Activated naive CD4-positive, alpha-beta T cell treated with anti-CD3 and anti-CD28 coated beads for 36 hours (primary cell): ENCODE measurements at regions of chr3 and their contacts with region 1.

Region 1: GRCh38 chr3:30042274-30042859 is 564.0 kb upstream of the TGFBR2 start:
- DNase-seq: peak; percentile 84
- H3K4me3 Mint-ChIP-seq: no peak overlapping the region
- H3K27ac Mint-ChIP-seq: no peak overlapping the region
- H3K4me1 Mint-ChIP-seq: no peaks in the 10 kb centered on the region
- H3K27me3 Mint-ChIP-seq: peaks cover 29% of the 10 kb centered on the region

Region 2: DNA sequence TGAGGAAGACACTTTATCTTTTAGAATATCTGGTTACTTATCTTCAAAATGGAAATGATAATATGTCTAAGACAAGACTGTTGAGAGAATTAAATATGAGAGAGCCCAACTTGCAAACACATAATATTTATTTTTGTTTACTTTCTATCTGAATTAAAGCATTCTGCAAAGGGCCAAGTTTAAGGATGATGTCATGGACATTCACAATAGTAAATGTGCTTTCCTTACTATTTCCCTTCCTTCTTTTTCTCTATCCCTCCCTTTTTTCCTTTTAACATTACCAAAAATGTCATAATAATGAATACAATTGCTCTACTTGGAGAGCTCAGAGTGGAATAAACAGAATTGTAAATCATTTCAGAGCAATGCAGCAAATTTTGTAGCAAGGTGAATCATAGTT is 11.6 kb before region 1 on chr3:
- CTCF ChIA-PET with region 1: interaction called, 11 read pairs
- intact Hi-C with region 1: no loop called
- DNase-seq: no peak
- H3K4me3 Mint-ChIP-seq: no peak overlapping the region
- H3K27ac Mint-ChIP-seq: no peak overlapping the region
- H3K4me1 Mint-ChIP-seq: no peaks in the 10 kb centered on the region
- H3K27me3 Mint-ChIP-seq: peaks cover 4% of the 10 kb centered on the region

Region 3: GRCh38 chr3:30112902-30113484 is 70.6 kb after region 1 on chr3:
- CTCF ChIA-PET with region 1: no interaction called
- intact Hi-C with region 1: loop called (anchors 2 kb)
- DNase-seq: no peak
- H3K4me3 Mint-ChIP-seq: no peak overlapping the region
- H3K27ac Mint-ChIP-seq: no peak overlapping the region
- H3K4me1 Mint-ChIP-seq: peaks cover 10% of the 10 kb centered on the region
- H3K27me3 Mint-ChIP-seq: no peaks in the 10 kb centered on the region

Region 4: GRCh38 chr3:30180310-30181177 is 138.2 kb after region 1 on chr3:
- CTCF ChIA-PET with region 1: no interaction called
- intact Hi-C with region 1: loop called (anchors 5 kb)
- DNase-seq: no peak
- H3K4me3 Mint-ChIP-seq: no peak overlapping the region
- H3K27ac Mint-ChIP-seq: no peak overlapping the region
- H3K4me1 Mint-ChIP-seq: no peaks in the 10 kb centered on the region
- H3K27me3 Mint-ChIP-seq: no peaks in the 10 kb centered on the region

Region 5: DNA sequence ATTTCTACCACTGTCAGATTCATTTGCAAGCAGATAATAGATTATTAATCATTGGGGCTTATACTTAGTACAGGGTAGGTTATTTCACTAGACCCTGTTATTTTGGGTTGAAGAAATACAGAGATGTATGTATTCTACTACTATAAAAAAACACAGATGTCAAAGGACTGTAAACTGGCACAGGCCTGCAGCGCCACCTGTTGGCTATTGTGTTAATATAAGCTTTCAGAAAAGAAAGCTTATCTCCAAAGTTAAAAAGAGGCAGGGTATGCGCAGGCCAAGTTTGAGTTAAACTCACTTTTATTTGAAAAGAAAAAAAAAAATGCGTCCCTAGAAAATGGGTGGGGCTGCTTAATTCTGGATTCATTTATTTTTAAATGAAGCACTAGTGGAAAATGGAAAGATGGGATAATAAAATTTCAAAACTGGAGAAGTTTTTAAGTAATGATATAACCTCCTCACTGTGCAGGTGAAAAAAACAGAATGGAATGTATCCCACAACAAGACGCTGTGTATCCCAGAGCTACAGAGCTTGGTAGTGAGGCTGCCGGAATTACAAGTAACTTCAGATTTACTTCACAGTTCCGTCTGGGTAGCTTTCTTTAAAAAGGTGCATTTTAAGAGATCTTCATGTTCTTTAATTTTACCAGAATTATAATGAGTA is 156.9 kb after region 1 on chr3:
- CTCF ChIA-PET with region 1: interaction called, 58 read pairs
- intact Hi-C with region 1: loop called (anchors 1 kb)
- DNase-seq: peak; percentile 89
- H3K4me3 Mint-ChIP-seq: no peak overlapping the region
- H3K27ac Mint-ChIP-seq: no peak overlapping the region
- H3K4me1 Mint-ChIP-seq: peaks cover 6% of the 10 kb centered on the region
- H3K27me3 Mint-ChIP-seq: no peaks in the 10 kb centered on the region

Region 6: DNA sequence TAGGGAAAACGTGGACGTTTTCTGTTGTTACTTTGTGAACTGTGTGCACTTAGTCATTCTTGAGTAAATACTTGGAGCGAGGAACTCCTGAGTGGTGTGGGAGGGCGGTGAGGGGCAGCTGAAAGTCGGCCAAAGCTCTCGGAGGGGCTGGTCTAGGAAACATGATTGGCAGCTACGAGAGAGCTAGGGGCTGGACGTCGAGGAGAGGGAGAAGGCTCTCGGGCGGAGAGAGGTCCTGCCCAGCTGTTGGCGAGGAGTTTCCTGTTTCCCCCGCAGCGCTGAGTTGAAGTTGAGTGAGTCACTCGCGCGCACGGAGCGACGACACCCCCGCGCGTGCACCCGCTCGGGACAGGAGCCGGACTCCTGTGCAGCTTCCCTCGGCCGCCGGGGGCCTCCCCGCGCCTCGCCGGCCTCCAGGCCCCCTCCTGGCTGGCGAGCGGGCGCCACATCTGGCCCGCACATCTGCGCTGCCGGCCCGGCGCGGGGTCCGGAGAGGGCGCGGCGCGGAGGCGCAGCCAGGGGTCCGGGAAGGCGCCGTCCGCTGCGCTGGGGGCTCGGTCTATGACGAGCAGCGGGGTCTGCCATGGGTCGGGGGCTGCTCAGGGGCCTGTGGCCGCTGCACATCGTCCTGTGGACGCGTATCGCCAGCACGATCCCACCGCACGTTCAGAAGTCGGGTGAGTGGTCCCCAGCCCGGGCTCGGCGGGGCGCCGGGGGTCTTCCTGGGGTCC is 564.1 kb after region 1 on chr3 and contains the start of gene TGFBR2:
- CTCF ChIA-PET with region 1: no interaction called
- intact Hi-C with region 1: loop called (anchors 10 kb)
- DNase-seq: peak; percentile 90
- H3K4me3 Mint-ChIP-seq: peak within 1 kb of the TSS; percentile 94
- H3K27ac Mint-ChIP-seq: peak within 1 kb of the TSS; percentile 100
- H3K4me1 Mint-ChIP-seq: peaks cover 52% of the 10 kb centered on the region
- H3K27me3 Mint-ChIP-seq: no peaks in the 10 kb centered on the region
- total RNA-seq, gene TGFBR2: 57.8 to 58.1 TPM

Region 7: DNA sequence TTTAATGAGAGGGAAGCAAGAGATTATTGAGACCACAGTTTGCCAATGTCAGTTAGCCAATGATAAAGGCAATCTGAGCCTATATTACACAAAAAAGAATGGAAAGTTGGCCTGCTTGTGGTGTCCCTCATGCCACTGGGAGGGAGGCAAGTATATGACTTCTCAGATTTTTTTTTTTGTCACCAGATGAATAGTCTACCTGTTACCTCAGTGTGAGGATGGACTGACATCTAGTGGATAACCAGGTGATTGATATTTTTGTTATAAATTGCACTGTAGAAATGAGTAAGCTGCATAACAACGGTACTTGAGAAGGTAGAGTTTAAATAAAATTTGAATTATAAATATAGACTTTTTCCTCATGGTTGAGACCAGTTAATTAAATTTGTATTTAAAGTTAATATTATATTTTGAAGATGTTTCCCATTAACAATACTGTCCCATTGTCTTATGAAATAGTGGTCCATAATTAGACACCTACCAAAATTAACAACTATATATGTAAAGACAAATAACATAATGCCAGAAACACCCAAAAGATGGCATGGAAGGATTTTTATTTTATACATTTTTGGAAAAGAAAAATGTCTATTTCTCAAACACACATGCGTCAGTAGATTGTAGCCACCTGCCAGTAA is 1089.9 kb after region 1 on chr3:
- CTCF ChIA-PET with region 1: no interaction called
- intact Hi-C with region 1: loop called (anchors 2 kb)
- DNase-seq: no peak
- H3K4me3 Mint-ChIP-seq: no peak overlapping the region
- H3K27ac Mint-ChIP-seq: no peak overlapping the region
- H3K4me1 Mint-ChIP-seq: no peaks in the 10 kb centered on the region
- H3K27me3 Mint-ChIP-seq: no peaks in the 10 kb centered on the region

Region 8: GRCh38 chr3:31288641-31289100 is 1246.3 kb after region 1 on chr3:
- CTCF ChIA-PET with region 1: no interaction called
- intact Hi-C with region 1: no loop called
- DNase-seq: peak; percentile 32
- H3K4me3 Mint-ChIP-seq: no peak overlapping the region
- H3K27ac Mint-ChIP-seq: no peak overlapping the region
- H3K4me1 Mint-ChIP-seq: peaks cover 11% of the 10 kb centered on the region
- H3K27me3 Mint-ChIP-seq: no peaks in the 10 kb centered on the region